CD8-positive, alpha-beta T cell (primary cell): ENCODE measurements at regions of chr5 and their contacts with region 1.

Region 1: GRCh38 chr5:81533629-81534405 is 139.9 kb upstream of the ACOT12 start:
- DNase-seq: no peak
- ATAC-seq: no peak
- H3K4me3 ChIP-seq: no peak overlapping the region
- H3K4me3 Mint-ChIP-seq: peak overlapping the region; percentile 13
- H3K27ac ChIP-seq: no peak overlapping the region
- H3K27ac Mint-ChIP-seq: peak overlapping the region; percentile 56
- H3K4me1 ChIP-seq: peaks cover 33% of the 10 kb centered on the region
- H3K4me1 Mint-ChIP-seq: peaks cover 53% of the 10 kb centered on the region
- H3K27me3 ChIP-seq: no peaks in the 10 kb centered on the region
- H3K27me3 Mint-ChIP-seq: no peaks in the 10 kb centered on the region
- CTCF ChIP-seq: no peak

Region 2: GRCh38 chr5:81519217-81519905 is 14.5 kb before region 1 on chr5:
- CTCF ChIA-PET with region 1: no interaction called
- POLR2A ChIA-PET with region 1: no interaction called
- intact Hi-C with region 1: loop called in 1 of 2 experiments (anchors 2 kb)
- DNase-seq: no peak
- ATAC-seq: no peak
- H3K4me3 ChIP-seq: no peak overlapping the region
- H3K4me3 Mint-ChIP-seq: no peak overlapping the region
- H3K27ac ChIP-seq: no peak overlapping the region
- H3K27ac Mint-ChIP-seq: no peak overlapping the region
- H3K4me1 ChIP-seq: no peaks in the 10 kb centered on the region
- H3K4me1 Mint-ChIP-seq: no peaks in the 10 kb centered on the region
- H3K27me3 ChIP-seq: no peaks in the 10 kb centered on the region
- H3K27me3 Mint-ChIP-seq: no peaks in the 10 kb centered on the region
- CTCF ChIP-seq: no peak